ENCODE measurements at regions of chr4 and their contacts with region 1.

Region 1: DNA sequence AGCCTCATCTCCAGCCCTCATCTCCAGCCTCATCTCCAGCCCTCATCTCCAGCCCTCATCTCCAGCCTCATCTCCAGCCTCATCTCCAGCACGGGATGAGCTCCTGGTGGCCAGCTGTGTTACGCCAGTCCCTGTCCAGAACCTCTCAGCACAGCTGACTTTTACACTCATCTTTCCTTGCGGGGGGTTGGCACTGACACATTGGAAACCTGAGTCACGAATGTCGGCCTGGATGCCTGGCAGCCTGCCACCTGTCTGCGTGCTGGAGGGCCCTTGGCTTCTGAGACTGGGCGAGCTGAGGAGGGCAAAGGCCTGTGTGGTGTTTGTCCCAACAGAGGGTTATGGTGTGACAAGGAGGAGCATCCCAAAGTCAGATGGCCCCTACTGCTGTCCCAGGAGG is 66.1 kb upstream of the HGFAC start:
- DNase-seq: peak; percentile 67
- H3K4me3 ChIP-seq: no peak overlapping the region
- H3K27ac ChIP-seq: no peak overlapping the region
- H3K4me1 ChIP-seq: no peaks in the 10 kb centered on the region
- H3K27me3 ChIP-seq: no peaks in the 10 kb centered on the region
- CTCF ChIP-seq: no peak

Region 2: DNA sequence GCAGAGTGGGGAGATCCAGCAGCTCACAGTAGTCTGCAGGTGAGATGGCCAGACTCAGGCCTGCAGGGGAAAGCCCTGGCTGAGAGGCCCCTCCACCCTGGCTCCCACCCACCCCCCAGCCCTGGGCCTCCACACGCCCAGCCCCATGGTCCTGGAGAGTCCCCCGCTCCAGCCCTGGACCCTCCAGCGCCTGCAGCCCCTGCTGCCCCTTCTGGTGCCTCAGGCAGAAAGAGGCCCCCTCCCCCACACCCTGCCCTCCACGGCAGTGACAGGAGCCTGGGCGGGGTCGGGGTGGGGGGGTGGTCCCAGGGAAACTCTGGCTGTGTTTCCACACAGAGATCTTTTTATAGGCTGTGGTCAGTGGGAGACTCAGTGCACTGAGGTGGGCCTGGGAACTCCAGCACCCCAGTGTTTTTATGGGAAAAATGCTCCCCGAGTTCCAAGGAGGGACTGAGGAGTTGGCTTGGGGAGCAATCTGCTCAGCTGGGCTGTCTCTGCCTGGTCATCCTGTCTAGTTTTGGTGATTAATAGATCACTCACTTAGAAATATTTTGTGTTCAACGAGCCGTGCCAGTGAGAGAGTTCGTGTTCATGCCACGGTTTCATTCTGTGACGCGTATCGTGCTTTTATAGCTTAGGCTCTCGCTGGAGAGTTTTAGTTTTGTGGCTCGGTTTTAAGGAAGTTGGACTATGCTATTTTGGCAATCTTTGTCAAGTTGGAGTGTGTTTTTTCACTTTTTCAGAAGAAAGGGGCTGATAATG is 13.0 kb after region 1 on chr4:
- CTCF ChIA-PET with region 1: no interaction called
- dilution Hi-C with region 1: no loop called
- in situ Hi-C with region 1: no loop called
- intact Hi-C with region 1: loop called (anchors 1 kb)
- DNase-seq: peak; percentile 84
- H3K4me3 ChIP-seq: peak overlapping the region; percentile 73 to 85 (median 81)
- H3K27ac ChIP-seq: peak overlapping the region; percentile 83
- H3K4me1 ChIP-seq: peaks cover 33% of the 10 kb centered on the region
- H3K27me3 ChIP-seq: no peaks in the 10 kb centered on the region
- CTCF ChIP-seq: no peak

Region 3: GRCh38 chr4:3489451-3489962 is 113.8 kb after region 1 on chr4:
- CTCF ChIA-PET with region 1: no interaction called
- dilution Hi-C with region 1: no loop called
- in situ Hi-C with region 1: no loop called
- intact Hi-C with region 1: no loop called
- DNase-seq: no peak
- H3K4me3 ChIP-seq: no peak overlapping the region
- H3K27ac ChIP-seq: no peak overlapping the region
- H3K4me1 ChIP-seq: peaks cover 23% of the 10 kb centered on the region
- H3K27me3 ChIP-seq: no peaks in the 10 kb centered on the region
- CTCF ChIP-seq: no peak

Measured in mammary epithelial cell (primary cell).